ENCODE measurements at regions of chr17 and their contacts with region 1.

Region 1: GRCh38 chr17:82351716-82352488 is 7.1 kb upstream of the TEX19 start:
- DNase-seq: peak; percentile 88 to 91 (median 90)
- ATAC-seq: peak; percentile 82
- H3K4me3 ChIP-seq: no peak overlapping the region
- H3K27ac ChIP-seq: no peak overlapping the region
- H3K4me1 ChIP-seq: peaks cover 16% of the 10 kb centered on the region
- H3K27me3 ChIP-seq: no peaks in the 10 kb centered on the region
- CTCF ChIP-seq: peak; percentile 92 to 97 (median 94)
- POLR2A ChIP-seq: no peak

Region 2: GRCh38 chr17:82414548-82415281 is 62.8 kb after region 1 on chr17:
- intact Hi-C with region 1: loop called (anchors 5 kb)
- DNase-seq: peak; percentile 74 to 82 (median 79)
- ATAC-seq: peak; percentile 49
- H3K4me3 ChIP-seq: no peak overlapping the region
- H3K27ac ChIP-seq: no peak overlapping the region
- H3K4me1 ChIP-seq: peaks cover 35% of the 10 kb centered on the region
- H3K27me3 ChIP-seq: no peaks in the 10 kb centered on the region
- CTCF ChIP-seq: peak; percentile 38 to 79 (median 54)
- POLR2A ChIP-seq: no peak

Region 3: GRCh38 chr17:82559566-82560251 is 207.8 kb after region 1 on chr17:
- intact Hi-C with region 1: loop called (anchors 5 kb)
- DNase-seq: no peak
- ATAC-seq: peak; percentile 30
- H3K4me3 ChIP-seq: no peak overlapping the region
- H3K27ac ChIP-seq: no peak overlapping the region
- H3K4me1 ChIP-seq: peaks cover 29% of the 10 kb centered on the region
- H3K27me3 ChIP-seq: no peaks in the 10 kb centered on the region
- CTCF ChIP-seq: no peak
- POLR2A ChIP-seq: no peak

Region 4: DNA sequence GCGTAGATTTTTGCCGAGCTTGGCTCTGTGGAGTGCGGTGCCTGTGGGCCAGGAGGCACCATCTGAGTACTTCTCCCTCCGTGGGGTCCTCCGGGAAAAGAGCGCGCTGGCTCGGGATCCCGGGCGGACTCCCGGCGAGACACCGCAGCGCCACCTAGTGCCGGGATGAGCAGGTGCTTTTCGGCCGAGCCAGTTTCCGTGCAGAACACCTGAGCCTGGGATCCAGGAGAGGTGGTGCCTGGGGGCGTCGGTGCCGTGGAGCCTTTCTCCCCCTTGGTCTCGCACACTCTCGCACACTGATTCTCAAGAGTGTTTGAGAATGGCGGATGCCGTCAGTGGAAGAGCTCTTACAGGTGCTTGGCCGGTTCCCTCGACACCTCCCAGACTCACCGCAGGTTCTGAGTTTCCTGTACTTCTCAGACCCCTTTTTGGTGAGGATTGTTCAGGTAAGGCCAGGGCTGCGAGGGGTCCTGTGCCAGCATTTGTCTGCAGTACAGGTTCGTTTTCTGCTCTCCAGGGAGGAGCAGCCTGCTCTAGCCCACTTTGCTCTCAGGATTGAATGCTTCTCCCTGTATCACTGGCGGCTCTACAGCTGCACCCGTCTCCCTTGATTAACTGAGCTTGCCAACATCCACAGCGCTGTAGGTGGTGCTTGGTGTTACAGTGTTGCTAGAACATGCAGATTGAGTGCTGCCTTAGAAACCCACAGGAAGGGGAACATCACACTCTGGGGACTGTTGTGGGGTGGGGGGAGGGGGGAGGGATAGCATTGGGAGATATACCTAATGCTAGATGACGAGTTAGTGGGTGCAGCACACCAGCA is 423.3 kb after region 1 on chr17:
- intact Hi-C with region 1: loop called (anchors 5 kb)
- DNase-seq: peak; percentile 71 to 81 (median 76)
- ATAC-seq: peak; percentile 69
- H3K4me3 ChIP-seq: no peak overlapping the region
- H3K27ac ChIP-seq: no peak overlapping the region
- H3K4me1 ChIP-seq: peaks cover 8% of the 10 kb centered on the region
- H3K27me3 ChIP-seq: no peaks in the 10 kb centered on the region
- CTCF ChIP-seq: peak; percentile 75 to 93 (median 80)
- POLR2A ChIP-seq: no peak